ENCODE measurements at regions of chr2 and their contacts with region 1.

Region 1: GRCh38 chr2:178280244-178280852 is 86.0 kb downstream of the OSBPL6 start:
- DNase-seq: peak in 1 of 2 donors; percentile 65
- H3K4me3 ChIP-seq: no peak overlapping the region
- H3K27ac ChIP-seq: no peak overlapping the region
- H3K4me1 ChIP-seq: no peaks in the 10 kb centered on the region
- H3K27me3 ChIP-seq: no peaks in the 10 kb centered on the region
- CTCF ChIP-seq: peak; percentile 56 to 77 (median 76)

Region 2: DNA sequence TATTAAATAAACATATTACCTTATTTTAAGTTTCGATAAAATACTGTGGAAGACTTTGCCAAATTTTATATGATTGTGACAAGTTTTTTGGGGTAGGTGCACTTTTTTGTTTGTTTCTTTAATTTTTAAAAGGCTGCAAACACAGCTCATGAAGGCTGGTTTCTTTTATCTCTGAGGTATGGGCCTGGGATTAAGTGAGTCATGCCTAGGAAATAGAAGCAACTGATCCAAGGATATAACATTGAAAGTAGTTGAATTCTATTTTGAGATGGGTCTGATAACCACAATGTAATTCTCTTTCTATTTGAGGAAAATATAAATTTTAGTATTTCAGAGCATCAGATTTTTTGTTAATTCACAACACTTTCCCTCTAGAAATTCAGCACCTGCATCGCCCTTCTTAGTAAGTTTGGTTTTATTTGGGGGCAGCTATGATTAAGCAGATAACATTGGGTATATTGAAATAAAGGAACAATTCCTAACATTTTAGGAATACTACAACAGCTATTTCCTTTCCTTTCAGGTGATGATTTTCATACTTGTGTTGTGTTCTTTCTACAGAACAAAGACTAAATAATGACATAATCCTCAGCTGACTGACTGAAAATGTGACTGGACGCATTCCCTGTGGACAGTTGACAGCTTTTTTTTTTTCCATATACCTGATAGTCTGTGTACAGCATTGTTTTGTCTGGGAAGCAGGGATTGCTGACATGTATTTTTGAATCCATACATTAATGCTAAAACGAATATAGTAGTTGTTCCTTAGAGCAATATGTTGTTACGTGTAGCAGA is 151.3 kb before region 1 on chr2:
- intact Hi-C with region 1: loop called (anchors 2 kb)
- DNase-seq: no peak
- H3K4me3 ChIP-seq: no peak overlapping the region
- H3K27ac ChIP-seq: no peak overlapping the region
- H3K4me1 ChIP-seq: no peaks in the 10 kb centered on the region
- H3K27me3 ChIP-seq: no peaks in the 10 kb centered on the region
- CTCF ChIP-seq: no peak

Region 3: GRCh38 chr2:180017784-180018183 is 1737.4 kb after region 1 on chr2:
- intact Hi-C with region 1: no loop called
- DNase-seq: peak in 1 of 2 donors; percentile 63
- H3K4me3 ChIP-seq: no peak overlapping the region
- H3K27ac ChIP-seq: no peak overlapping the region
- H3K4me1 ChIP-seq: no peaks in the 10 kb centered on the region
- H3K27me3 ChIP-seq: no peaks in the 10 kb centered on the region
- CTCF ChIP-seq: no peak